Caco-2 (cell line): ENCODE measurements at regions of chr19 and their contacts with region 1.

Region 1: GRCh38 chr19:18340190-18340989 is at the start of gene PGPEP1:
- DNase-seq: peak; percentile 57 to 82
- H3K4me3 ChIP-seq: peak within 1 kb of the TSS; percentile 71
- H3K4me3 Mint-ChIP-seq: peak within 1 kb of the TSS; percentile 70
- H3K27ac Mint-ChIP-seq: peak within 1 kb of the TSS; percentile 60
- H3K4me1 ChIP-seq: peaks cover 4% of the 10 kb centered on the region
- H3K4me1 Mint-ChIP-seq: peaks cover 7% of the 10 kb centered on the region
- H3K27me3 ChIP-seq: no peaks in the 10 kb centered on the region
- H3K27me3 Mint-ChIP-seq: no peaks in the 10 kb centered on the region
- CTCF ChIP-seq: no peak
- total RNA-seq, gene PGPEP1: 25.6 and 26.0 TPM in 2 replicates

Region 2: GRCh38 chr19:18353378-18354005 is 13.1 kb after region 1 on chr19:
- CTCF ChIA-PET with region 1: no interaction called
- POLR2A ChIA-PET with region 1: no interaction called
- intact Hi-C with region 1: no loop called
- DNase-seq: no peak
- H3K4me3 ChIP-seq: no peak overlapping the region
- H3K4me3 Mint-ChIP-seq: no peak overlapping the region
- H3K27ac Mint-ChIP-seq: no peak overlapping the region
- H3K4me1 ChIP-seq: no peaks in the 10 kb centered on the region
- H3K4me1 Mint-ChIP-seq: no peaks in the 10 kb centered on the region
- H3K27me3 ChIP-seq: no peaks in the 10 kb centered on the region
- H3K27me3 Mint-ChIP-seq: no peaks in the 10 kb centered on the region
- CTCF ChIP-seq: no peak

Region 3: DNA sequence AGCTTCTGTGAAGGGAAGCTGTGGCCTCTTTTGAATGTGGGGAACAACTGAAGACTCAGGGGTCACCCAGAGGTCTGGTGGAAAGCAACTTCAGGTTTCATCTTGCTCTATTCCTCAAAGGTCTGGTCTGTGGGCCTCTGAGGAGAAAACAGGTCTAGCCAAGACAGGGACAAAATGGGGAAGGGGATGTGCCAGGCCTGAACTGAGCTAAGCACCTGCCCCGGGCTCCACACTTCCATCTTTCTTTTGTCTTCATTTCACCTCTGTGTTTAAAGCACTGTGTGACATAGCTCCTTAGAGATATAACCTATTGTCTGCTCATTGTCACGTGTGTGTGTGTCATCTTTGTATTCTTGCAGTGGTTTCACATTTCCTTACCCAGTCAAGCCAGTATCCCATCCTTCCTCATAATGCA is 25.6 kb after region 1 on chr19:
- CTCF ChIA-PET with region 1: interaction called, 10 read pairs
- POLR2A ChIA-PET with region 1: no interaction called
- intact Hi-C with region 1: no loop called
- DNase-seq: no peak
- H3K4me3 ChIP-seq: no peak overlapping the region
- H3K4me3 Mint-ChIP-seq: no peak overlapping the region
- H3K27ac Mint-ChIP-seq: peak overlapping the region; percentile 83
- H3K4me1 ChIP-seq: peaks cover 20% of the 10 kb centered on the region
- H3K4me1 Mint-ChIP-seq: peaks cover 7% of the 10 kb centered on the region
- H3K27me3 ChIP-seq: no peaks in the 10 kb centered on the region
- H3K27me3 Mint-ChIP-seq: no peaks in the 10 kb centered on the region
- CTCF ChIP-seq: no peak

Region 4: GRCh38 chr19:18377004-18377405 is 36.6 kb after region 1 on chr19:
- CTCF ChIA-PET with region 1: no interaction called
- POLR2A ChIA-PET with region 1: no interaction called
- intact Hi-C with region 1: no loop called
- DNase-seq: peak; percentile 72 to 81
- H3K4me3 ChIP-seq: no peak overlapping the region
- H3K4me3 Mint-ChIP-seq: peak overlapping the region; percentile 50
- H3K27ac Mint-ChIP-seq: peak overlapping the region; percentile 95
- H3K4me1 ChIP-seq: peaks cover 84% of the 10 kb centered on the region
- H3K4me1 Mint-ChIP-seq: peaks cover 18% of the 10 kb centered on the region
- H3K27me3 ChIP-seq: no peaks in the 10 kb centered on the region
- H3K27me3 Mint-ChIP-seq: no peaks in the 10 kb centered on the region
- CTCF ChIP-seq: no peak

Region 5: DNA sequence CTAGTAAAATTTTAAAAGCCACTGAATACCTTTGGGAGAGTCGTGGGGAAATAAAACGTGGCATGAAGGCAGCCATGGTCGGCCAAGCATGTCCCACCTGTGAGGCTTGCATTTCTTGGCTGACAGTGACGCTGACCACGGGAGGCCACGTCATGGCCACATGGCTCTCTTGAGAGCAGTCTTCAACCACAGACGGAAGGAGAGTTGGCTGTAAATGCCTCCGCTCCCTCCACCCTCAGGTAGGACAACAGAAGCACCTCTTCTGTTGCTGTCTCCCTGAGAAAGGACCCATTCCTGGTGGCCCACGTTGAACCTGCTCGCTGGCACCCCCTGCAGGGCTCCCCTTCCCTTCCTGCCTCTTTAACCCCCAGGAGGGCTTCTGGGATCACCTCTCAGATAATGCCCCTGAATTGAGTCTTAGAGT is 67.7 kb after region 1 on chr19:
- CTCF ChIA-PET with region 1: interaction called, 10 read pairs
- POLR2A ChIA-PET with region 1: no interaction called
- intact Hi-C with region 1: no loop called
- DNase-seq: peak in 1 of 2 experiments; percentile 63
- H3K4me3 ChIP-seq: no peak overlapping the region
- H3K4me3 Mint-ChIP-seq: no peak overlapping the region
- H3K27ac Mint-ChIP-seq: no peak overlapping the region
- H3K4me1 ChIP-seq: peaks cover 2% of the 10 kb centered on the region
- H3K4me1 Mint-ChIP-seq: peaks cover 11% of the 10 kb centered on the region
- H3K27me3 ChIP-seq: no peaks in the 10 kb centered on the region
- H3K27me3 Mint-ChIP-seq: no peaks in the 10 kb centered on the region
- CTCF ChIP-seq: peak; percentile 59 to 63